MCF 10A (cell line): ENCODE measurements at regions of chr5 and their contacts with region 1.

Region 1: GRCh38 chr5:73693481-73694061 is 67.6 kb downstream of the ARHGEF28 start:
- DNase-seq: peak; percentile 30
- H3K4me3 Mint-ChIP-seq: no peak overlapping the region
- H3K27ac Mint-ChIP-seq: peak overlapping the region; percentile 79
- H3K4me1 Mint-ChIP-seq: peaks cover 29% of the 10 kb centered on the region
- H3K27me3 Mint-ChIP-seq: no peaks in the 10 kb centered on the region
- CTCF ChIP-seq: peak; percentile 29

Region 2: GRCh38 chr5:73591102-73591695 is 102.4 kb before region 1 on chr5:
- CTCF ChIA-PET with region 1: interaction called, 107 read pairs
- POLR2A ChIA-PET with region 1: interaction called, 4 read pairs
- intact Hi-C with region 1: loop called (anchors 1 kb)
- DNase-seq: peak; percentile 84
- H3K4me3 Mint-ChIP-seq: no peak overlapping the region
- H3K27ac Mint-ChIP-seq: no peak overlapping the region
- H3K4me1 Mint-ChIP-seq: peaks cover 14% of the 10 kb centered on the region
- H3K27me3 Mint-ChIP-seq: no peaks in the 10 kb centered on the region
- CTCF ChIP-seq: peak; percentile 64

Region 3: GRCh38 chr5:73625944-73626811 is 67.4 kb before region 1 on chr5 and contains the start of gene ARHGEF28:
- CTCF ChIA-PET with region 1: interaction called, 13 read pairs
- POLR2A ChIA-PET with region 1: interaction called, 4 read pairs
- intact Hi-C with region 1: loop called (anchors 2 kb)
- DNase-seq: peak; percentile 79
- H3K4me3 Mint-ChIP-seq: peak within 1 kb of the TSS; percentile 72
- H3K27ac Mint-ChIP-seq: peak within 1 kb of the TSS; percentile 46
- H3K4me1 Mint-ChIP-seq: peaks cover 34% of the 10 kb centered on the region
- H3K27me3 Mint-ChIP-seq: no peaks in the 10 kb centered on the region
- CTCF ChIP-seq: no peak
- total RNA-seq, gene ARHGEF28: 27.2 and 34.8 TPM in 2 replicates

Region 4: DNA sequence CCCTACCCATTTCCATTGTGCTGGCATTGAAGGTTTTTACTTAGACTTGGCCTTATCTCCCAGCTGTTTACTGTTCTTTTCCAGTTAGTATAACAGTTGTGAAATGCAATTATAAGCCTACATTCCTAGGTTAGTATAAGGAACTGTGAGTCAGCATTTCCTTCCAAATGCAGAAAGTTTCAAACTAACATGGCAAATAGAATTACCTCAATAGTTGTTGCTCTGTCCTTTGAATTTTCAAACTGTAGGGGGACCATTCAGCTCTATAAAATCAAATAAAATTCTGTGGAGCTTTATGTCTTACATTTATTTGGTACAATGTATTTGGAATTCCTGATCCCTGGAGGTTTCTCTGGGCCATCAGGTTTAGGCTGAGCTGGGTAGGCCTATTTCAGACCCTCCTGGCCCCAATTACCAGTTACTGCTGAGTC is 20.4 kb before region 1 on chr5:
- CTCF ChIA-PET with region 1: interaction called, 24 read pairs
- POLR2A ChIA-PET with region 1: interaction called, 13 read pairs
- intact Hi-C with region 1: no loop called
- DNase-seq: peak; percentile 70
- H3K4me3 Mint-ChIP-seq: no peak overlapping the region
- H3K27ac Mint-ChIP-seq: peak overlapping the region; percentile 96
- H3K4me1 Mint-ChIP-seq: peaks cover 34% of the 10 kb centered on the region
- H3K27me3 Mint-ChIP-seq: no peaks in the 10 kb centered on the region
- CTCF ChIP-seq: no peak

Region 5: GRCh38 chr5:73705364-73705763 is 11.8 kb after region 1 on chr5:
- CTCF ChIA-PET with region 1: interaction called, 28 read pairs
- POLR2A ChIA-PET with region 1: interaction called, 4 read pairs
- intact Hi-C with region 1: no loop called
- DNase-seq: no peak
- H3K4me3 Mint-ChIP-seq: no peak overlapping the region
- H3K27ac Mint-ChIP-seq: no peak overlapping the region
- H3K4me1 Mint-ChIP-seq: peaks cover 9% of the 10 kb centered on the region
- H3K27me3 Mint-ChIP-seq: no peaks in the 10 kb centered on the region
- CTCF ChIP-seq: no peak

Region 6: DNA sequence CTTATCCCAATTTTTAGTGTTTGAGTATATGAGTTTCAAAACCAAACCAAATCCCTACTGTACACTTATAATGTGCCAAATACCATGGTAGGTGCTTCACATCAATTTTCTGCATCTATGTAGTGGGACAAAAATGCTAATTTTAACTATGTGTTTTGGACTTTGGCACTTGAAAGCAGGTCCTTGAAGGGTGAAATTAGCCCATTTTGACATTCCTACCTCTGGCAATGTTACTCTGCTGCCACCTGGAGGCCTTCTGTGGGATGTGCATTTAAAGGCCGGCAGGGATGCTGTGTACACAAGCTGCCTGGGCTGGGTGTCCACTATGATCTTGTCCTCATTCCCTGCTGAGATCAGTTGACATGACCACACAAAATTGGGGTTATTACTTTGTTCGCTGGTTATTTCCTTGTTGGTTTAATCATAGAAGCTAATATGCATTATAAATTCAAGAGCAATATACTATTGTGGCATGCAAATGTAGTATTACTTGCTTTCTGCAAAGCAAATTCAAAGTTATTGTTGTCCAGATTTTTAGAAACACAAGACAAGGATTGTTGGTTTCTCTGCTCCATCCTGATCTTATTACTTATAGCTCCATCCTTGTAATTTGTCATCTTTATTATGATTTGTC is 99.2 kb after region 1 on chr5:
- CTCF ChIA-PET with region 1: interaction called, 67 read pairs
- POLR2A ChIA-PET with region 1: no interaction called
- intact Hi-C with region 1: loop called (anchors 2 kb)
- DNase-seq: peak; percentile 79
- H3K4me3 Mint-ChIP-seq: no peak overlapping the region
- H3K27ac Mint-ChIP-seq: no peak overlapping the region
- H3K4me1 Mint-ChIP-seq: peaks cover 13% of the 10 kb centered on the region
- H3K27me3 Mint-ChIP-seq: no peaks in the 10 kb centered on the region
- CTCF ChIP-seq: peak; percentile 96